Left lung (tissue), 14 donors: ENCODE measurements at regions of chr1 and their contacts with region 1.

Region 1: GRCh38 chr1:111507411-111508201 is 4.2 kb upstream of the ADORA3 start:
- DNase-seq: peak; percentile 42 to 94 (median 68)
- ATAC-seq: peak; percentile 76
- H3K4me3 ChIP-seq: peak overlapping the region; percentile 12 to 31
- H3K27ac ChIP-seq: peak overlapping the region; percentile 97 to 99
- H3K4me1 ChIP-seq: peaks cover 41 to 86% of the 10 kb centered on the region in 2 donors
- H3K27me3 ChIP-seq: no peaks in the 10 kb centered on the region
- CTCF ChIP-seq: no peak

Region 2: GRCh38 chr1:111648806-111649205 is 141.2 kb after region 1 on chr1:
- intact Hi-C with region 1: loop called in 1 of 2 experiments (anchors 10 kb)
- DNase-seq: no peak
- ATAC-seq: no peak
- H3K4me3 ChIP-seq: no peak overlapping the region
- H3K27ac ChIP-seq: peak overlapping the region in 1 of 2 donors; percentile 4
- H3K4me1 ChIP-seq: peaks cover 0 to 37% of the 10 kb centered on the region in 2 donors
- H3K27me3 ChIP-seq: no peaks in the 10 kb centered on the region
- CTCF ChIP-seq: no peak

Region 3: GRCh38 chr1:111755331-111756123 is 247.9 kb after region 1 on chr1 and contains the start of gene DDX20:
- intact Hi-C with region 1: loop called in 1 of 2 experiments (anchors 10 kb)
- DNase-seq: peak; percentile 94 to 99 (median 98)
- ATAC-seq: peak; percentile 99
- H3K4me3 ChIP-seq: peak within 1 kb of the TSS; percentile 63 to 78
- H3K27ac ChIP-seq: peak within 1 kb of the TSS; percentile 92 to 95
- H3K4me1 ChIP-seq: peaks cover 12 to 28% of the 10 kb centered on the region in 2 donors
- H3K27me3 ChIP-seq: no peaks in the 10 kb centered on the region
- CTCF ChIP-seq: peak; percentile 80 to 83
- polyA plus RNA-seq, gene DDX20: 17.7 to 22.8 (median 19.4) TPM